Posterior vena cava (tissue), 2 donors: ENCODE measurements at regions of chr10 and their contacts with region 1.

Region 1: DNA sequence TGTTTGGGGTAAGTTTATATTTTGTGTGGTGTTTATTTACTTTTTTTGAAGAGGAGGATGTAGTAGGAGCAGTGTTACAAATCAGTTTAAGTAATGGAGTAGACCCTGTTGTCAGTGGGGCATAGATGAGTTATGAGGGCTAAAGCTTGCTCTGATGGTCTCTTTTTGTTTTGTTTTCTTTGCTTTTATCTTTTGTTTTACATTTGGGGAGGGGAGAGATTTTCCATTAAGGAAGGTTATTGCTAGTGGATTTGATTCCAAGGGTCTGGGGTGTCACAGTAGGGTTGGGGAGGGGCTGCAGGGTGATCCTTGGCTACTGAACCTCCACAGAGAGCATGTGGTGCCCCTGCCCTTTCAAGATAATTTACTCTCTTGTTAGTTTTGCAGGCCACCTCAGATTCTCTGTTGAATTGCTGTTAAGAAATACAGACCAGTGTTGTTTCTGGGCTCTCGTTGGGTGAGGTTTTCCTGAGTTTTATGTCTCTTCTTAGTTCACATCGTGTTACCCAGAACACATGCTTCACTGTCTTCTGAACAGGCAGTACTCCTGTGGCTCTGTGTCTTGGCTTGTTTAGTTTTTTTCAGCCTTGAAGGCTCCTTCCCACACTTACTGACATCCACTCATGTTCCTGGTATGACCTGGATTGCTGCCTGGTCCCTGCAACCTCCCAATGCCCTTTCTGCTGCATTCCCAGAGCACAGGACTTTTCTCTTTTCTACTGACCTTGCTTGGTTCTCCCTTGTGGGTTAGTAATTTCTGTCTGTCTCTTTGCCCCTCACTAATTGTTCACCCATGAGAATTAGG is 4.2 kb downstream of the KIFBP start:
- DNase-seq: peak; percentile 81

Region 2: GRCh38 chr10:69092959-69093850 is 100.4 kb after region 1 on chr10:
- intact Hi-C with region 1: loop called in 1 of 2 experiments (anchors 10 kb)
- DNase-seq: no peak

Region 3: GRCh38 chr10:69994262-69994661 is 1001.4 kb after region 1 on chr10:
- intact Hi-C with region 1: loop called in 1 of 2 experiments (anchors 10 kb)
- DNase-seq: no peak